ENCODE measurements at regions of chr4 and their contacts with region 1.

Region 1: DNA sequence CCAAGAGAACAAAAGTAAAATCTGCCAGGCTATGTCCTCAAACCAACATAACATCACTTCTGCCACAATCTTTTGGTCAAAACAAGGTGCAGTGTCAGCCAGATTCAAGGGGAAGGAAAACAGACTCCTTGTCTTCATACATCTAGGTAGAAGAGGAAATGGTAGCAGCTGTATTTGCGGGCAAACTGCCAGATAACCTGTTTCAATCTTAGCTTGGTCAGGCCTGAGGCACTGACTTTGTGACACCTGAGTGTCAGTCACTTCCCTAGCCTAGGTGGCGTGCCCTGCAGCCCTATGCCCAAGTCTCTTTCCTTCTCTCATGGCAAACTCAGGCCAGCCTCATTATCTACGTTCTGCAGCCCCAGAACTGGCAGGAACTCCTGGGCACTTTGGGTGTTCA is 146.2 kb upstream of the JADE1 start:
- DNase-seq: no peak
- H3K4me3 ChIP-seq: no peak overlapping the region
- H3K27me3 ChIP-seq: no peaks in the 10 kb centered on the region
- CTCF ChIP-seq: no peak

Region 2: DNA sequence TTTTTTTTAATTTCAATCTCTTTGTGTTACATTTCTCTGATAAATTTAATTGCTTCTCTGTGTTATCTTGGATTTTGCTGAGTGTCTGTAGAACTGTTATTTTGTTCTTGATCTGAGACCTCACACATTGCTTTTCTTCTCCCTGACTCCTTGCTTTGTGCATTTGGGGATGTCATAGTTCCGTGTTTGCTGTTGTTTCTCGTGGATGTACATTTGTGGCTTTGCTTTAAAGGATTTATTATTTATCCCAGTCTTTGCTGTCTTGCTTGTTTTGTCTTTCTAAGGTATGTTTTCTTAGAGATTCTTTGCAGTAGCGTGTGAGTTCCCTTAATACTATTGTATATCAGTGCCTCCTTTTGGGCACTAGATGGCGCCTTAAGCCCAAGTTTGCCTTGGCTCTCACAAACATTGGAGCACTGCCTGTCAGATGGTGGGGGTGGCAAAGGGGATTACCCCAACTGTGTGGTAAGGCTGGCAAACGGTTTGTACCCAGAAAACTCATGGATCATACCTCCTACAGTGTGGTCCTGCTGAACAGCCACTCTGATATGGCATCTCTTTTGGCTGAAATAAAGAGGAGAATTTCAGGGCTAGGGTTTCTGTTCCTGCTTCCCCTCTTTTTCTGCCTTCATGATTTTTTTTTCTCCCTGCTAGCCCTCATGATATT is 472.1 kb before region 1 on chr4:
- CTCF ChIA-PET with region 1: no interaction called
- POLR2A ChIA-PET with region 1: no interaction called
- DNase-seq: peak; percentile 9
- H3K4me3 ChIP-seq: no peak overlapping the region
- H3K27me3 ChIP-seq: no peaks in the 10 kb centered on the region
- CTCF ChIP-seq: peak; percentile 79

Region 3: GRCh38 chr4:128707864-128708263 is 44.5 kb after region 1 on chr4:
- CTCF ChIA-PET with region 1: no interaction called
- POLR2A ChIA-PET with region 1: interaction called, 17 read pairs
- DNase-seq: peak; percentile 19
- H3K4me3 ChIP-seq: peak overlapping the region; percentile 6; the same call in 1 of the 2 replicates
- H3K27me3 ChIP-seq: no peaks in the 10 kb centered on the region
- CTCF ChIP-seq: no peak